ENCODE measurements at regions of chr14 and their contacts with region 1.

Region 1: DNA sequence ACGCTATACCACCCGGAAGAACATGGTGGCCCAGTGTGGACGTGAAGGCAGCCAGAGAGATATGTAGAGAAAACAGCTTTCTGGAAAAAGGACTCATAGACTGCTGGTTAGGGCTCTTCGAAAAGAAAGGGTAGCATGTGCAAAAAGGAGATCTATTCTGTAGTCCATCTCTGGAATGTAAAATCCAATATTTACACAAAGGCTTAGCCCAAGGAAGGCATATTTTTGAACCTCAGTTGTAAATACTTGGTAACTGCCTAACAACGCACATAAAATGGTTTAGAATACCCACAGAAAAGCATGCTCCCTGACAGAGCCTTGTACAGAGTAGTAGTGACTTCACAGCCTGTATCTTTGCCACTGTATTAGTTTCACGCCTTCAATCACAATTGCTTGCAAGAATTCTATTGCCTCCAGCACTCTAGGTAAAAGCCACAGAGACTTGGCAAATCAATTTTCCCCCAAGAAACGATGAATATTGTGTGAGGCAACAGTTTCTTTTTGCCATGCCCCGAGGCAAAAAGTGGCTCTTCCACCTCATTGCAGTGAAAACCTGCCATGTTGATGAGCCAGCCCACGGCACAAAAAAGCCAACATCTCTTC is 59.2 kb downstream of the TRIM9 start:
- DNase-seq: no peak

Region 2: GRCh38 chr14:51079489-51079888 is 43.8 kb after region 1 on chr14:
- intact Hi-C with region 1: loop called (anchors 5 kb)
- DNase-seq: no peak

Region 3: DNA sequence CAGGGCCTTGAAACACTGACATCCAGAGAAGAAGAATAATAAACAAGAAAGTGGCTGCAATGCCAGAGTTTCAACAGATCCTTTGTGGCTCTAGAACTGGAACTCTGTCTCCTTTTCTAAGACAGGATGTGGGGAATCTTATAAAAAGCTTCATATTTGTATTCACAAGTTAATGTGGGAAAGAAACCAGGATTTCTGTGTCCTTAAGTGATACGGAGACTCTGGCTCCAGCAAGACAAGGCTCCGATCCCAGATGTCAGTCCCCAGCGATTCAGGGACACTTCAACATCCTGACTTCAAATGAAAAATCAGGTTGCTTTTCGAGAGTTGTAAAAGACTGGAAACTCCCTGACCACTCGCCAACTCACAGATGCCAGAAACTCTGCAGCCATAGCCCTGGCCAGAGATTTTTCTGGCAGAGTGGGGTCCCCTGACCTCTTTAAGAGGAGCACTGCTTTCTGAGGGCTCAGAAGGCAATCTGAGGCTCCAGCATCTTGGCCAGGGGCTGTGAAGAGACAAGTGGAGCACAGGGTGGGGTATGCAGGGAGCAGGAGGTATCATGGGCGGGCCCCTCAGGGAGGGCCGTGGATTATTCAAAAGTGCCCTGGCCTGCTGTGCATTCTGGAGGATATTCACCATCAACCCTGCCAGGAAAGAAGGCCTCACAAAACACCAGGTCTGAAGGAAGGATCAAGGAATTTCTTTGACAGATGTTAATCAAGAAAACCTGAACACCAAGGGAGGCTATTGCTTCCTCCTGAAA is 257.6 kb after region 1 on chr14:
- intact Hi-C with region 1: no loop called
- DNase-seq: peak in 7 of 42 donors; percentile 4 to 38 (median 17)

Region 4: GRCh38 chr14:51490205-51490604 is 454.5 kb after region 1 on chr14:
- intact Hi-C with region 1: no loop called
- DNase-seq: no peak

Measured in head of caudate nucleus (tissue), 42 donors.